Activated CD4-positive, alpha-beta memory T cell treated with anti-CD3 and anti-CD28 coated beads for 36 hours (primary cell): ENCODE measurements at regions of chr18 and their contacts with region 1.

Region 1: GRCh38 chr18:41982942-41983660 is 28.1 kb downstream of the PIK3C3 start:
- DNase-seq: no peak
- H3K4me3 Mint-ChIP-seq: no peak overlapping the region
- H3K27ac Mint-ChIP-seq: peak overlapping the region; percentile 64
- H3K4me1 Mint-ChIP-seq: peaks cover 24% of the 10 kb centered on the region
- H3K27me3 Mint-ChIP-seq: no peaks in the 10 kb centered on the region

Region 2: DNA sequence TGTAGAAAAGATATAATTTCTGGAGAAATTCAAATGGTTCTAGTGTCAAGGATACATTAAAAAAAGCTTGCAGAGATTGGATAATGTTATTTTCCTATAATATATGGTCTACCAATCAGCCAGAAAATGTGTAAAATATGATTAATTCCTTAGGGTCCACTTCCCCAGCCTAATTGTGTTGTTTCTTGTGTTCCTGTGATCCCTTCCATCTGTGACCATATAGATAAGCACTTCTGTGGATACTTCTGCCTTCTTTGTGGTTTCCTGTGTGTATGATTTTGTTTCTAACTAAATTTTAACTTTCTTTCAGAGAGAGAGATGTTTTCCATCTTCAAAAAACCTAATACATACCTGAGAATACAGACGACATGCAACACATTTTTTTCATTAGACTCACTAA is 395.1 kb before region 1 on chr18:
- CTCF ChIA-PET with region 1: no interaction called
- POLR2A ChIA-PET with region 1: no interaction called
- intact Hi-C with region 1: no loop called
- DNase-seq: no peak
- H3K4me3 Mint-ChIP-seq: no peak overlapping the region
- H3K27ac Mint-ChIP-seq: no peak overlapping the region
- H3K4me1 Mint-ChIP-seq: no peaks in the 10 kb centered on the region
- H3K27me3 Mint-ChIP-seq: no peaks in the 10 kb centered on the region

Region 3: DNA sequence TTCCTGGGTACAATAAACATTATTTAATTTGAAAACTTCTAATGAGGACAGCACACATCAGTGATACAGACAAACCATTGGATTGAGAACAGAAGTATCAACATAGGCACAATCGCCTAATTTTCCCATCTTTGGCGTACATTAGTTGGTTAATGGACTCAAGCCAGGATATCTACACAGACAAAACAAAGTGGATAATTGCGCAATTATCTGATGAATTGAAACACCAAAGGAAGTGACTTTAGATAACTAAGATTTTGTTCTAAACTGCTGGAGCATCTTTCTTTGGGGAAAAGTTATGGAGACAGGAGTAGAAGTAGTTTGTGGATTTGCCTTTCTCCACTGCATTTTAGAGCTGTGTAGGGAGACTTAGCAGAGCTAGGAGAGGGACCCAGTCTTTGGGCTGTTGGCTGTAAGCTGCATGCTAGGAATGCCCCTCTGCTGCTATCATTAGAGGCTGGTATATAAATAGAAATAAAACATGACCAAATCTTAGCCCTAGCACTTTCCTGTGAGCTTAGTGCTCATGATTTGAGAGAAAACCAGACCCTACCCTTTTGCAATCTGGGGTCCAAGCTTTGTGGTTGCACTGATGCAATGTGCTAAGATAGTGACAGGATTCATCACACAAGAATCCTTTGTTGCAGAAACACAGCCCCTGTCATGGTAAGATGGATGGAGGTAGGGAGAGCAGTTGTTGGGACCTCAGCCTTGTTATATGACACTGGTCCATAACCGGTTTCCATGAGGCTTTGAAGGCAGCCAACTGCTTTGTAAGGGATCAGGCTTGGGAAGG is 292.6 kb before region 1 on chr18:
- CTCF ChIA-PET with region 1: no interaction called
- POLR2A ChIA-PET with region 1: no interaction called
- intact Hi-C with region 1: no loop called
- DNase-seq: no peak
- H3K4me3 Mint-ChIP-seq: no peak overlapping the region
- H3K27ac Mint-ChIP-seq: no peak overlapping the region
- H3K4me1 Mint-ChIP-seq: peaks cover 8% of the 10 kb centered on the region
- H3K27me3 Mint-ChIP-seq: no peaks in the 10 kb centered on the region

Region 4: GRCh38 chr18:41939326-41939725 is 43.8 kb before region 1 on chr18:
- CTCF ChIA-PET with region 1: no interaction called
- POLR2A ChIA-PET with region 1: no interaction called
- intact Hi-C with region 1: no loop called
- DNase-seq: no peak
- H3K4me3 Mint-ChIP-seq: no peak overlapping the region
- H3K27ac Mint-ChIP-seq: no peak overlapping the region
- H3K4me1 Mint-ChIP-seq: peaks cover 9% of the 10 kb centered on the region
- H3K27me3 Mint-ChIP-seq: peaks cover 18% of the 10 kb centered on the region

Region 5: GRCh38 chr18:41949206-41949920 is 33.7 kb before region 1 on chr18:
- CTCF ChIA-PET with region 1: no interaction called
- POLR2A ChIA-PET with region 1: interaction called, 4 read pairs
- intact Hi-C with region 1: loop called (anchors 1 kb)
- DNase-seq: no peak
- H3K4me3 Mint-ChIP-seq: no peak overlapping the region
- H3K27ac Mint-ChIP-seq: peak overlapping the region; percentile 76
- H3K4me1 Mint-ChIP-seq: peaks cover 21% of the 10 kb centered on the region
- H3K27me3 Mint-ChIP-seq: peaks cover 21% of the 10 kb centered on the region

Region 6: GRCh38 chr18:41954827-41955613 is 28.1 kb before region 1 on chr18 and contains the start of gene PIK3C3:
- CTCF ChIA-PET with region 1: no interaction called
- POLR2A ChIA-PET with region 1: no interaction called
- intact Hi-C with region 1: loop called (anchors 1 kb)
- DNase-seq: peak; percentile 98
- H3K4me3 Mint-ChIP-seq: peak within 1 kb of the TSS; percentile 100
- H3K27ac Mint-ChIP-seq: peak within 1 kb of the TSS; percentile 97
- H3K4me1 Mint-ChIP-seq: peaks cover 34% of the 10 kb centered on the region
- H3K27me3 Mint-ChIP-seq: peaks cover 1% of the 10 kb centered on the region
- total RNA-seq, gene PIK3C3: 46.8 to 49.5 TPM

Region 7: DNA sequence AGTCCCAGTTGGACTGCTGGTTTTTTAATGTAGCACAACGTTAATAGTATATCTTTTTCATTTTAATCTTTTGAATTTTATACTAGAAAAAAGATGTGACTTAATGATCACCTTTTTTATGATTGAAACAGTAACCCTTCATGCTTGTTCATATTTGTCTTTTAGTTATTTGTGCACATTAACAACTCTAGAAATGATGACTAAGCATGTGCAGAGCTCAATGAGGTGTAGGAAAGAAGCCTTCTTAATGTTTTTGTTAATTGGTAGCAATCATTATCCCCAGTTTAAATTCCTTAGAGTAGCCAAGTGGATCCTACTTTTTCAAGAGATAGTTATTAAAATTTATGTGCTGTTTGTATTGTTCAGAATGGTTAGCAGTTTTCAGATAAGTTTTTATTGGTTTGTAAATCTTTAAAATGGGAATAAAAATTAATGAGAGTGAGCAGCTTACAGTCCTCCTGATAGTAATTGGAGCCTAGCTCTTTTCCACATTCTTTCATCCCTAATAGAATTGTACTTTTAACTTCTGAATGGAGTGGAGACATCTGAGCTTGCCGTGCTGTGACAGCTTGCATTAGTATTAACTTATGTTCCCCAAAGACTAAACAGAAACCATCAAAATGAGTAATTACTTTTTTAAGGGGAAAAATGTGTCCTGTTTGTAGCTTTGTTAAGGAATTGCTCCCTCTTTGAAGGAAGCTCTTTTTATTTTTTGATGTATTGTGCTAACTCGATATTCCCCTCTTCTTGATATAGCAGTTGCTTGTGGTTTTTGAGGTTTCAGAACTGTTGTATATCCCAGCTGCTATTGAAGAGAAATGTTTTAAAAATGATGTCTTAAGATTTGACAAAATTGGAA is 10.8 kb before region 1 on chr18:
- CTCF ChIA-PET with region 1: interaction called, 4 read pairs
- POLR2A ChIA-PET with region 1: interaction called, 4 read pairs
- intact Hi-C with region 1: loop called (anchors 1 kb)
- DNase-seq: no peak
- H3K4me3 Mint-ChIP-seq: no peak overlapping the region
- H3K27ac Mint-ChIP-seq: no peak overlapping the region
- H3K4me1 Mint-ChIP-seq: peaks cover 31% of the 10 kb centered on the region
- H3K27me3 Mint-ChIP-seq: no peaks in the 10 kb centered on the region

Region 8: GRCh38 chr18:42011053-42011452 is 28.0 kb after region 1 on chr18:
- CTCF ChIA-PET with region 1: interaction called, 3 read pairs
- POLR2A ChIA-PET with region 1: no interaction called
- intact Hi-C with region 1: loop called (anchors 2 kb)
- DNase-seq: no peak
- H3K4me3 Mint-ChIP-seq: no peak overlapping the region
- H3K27ac Mint-ChIP-seq: no peak overlapping the region
- H3K4me1 Mint-ChIP-seq: peaks cover 13% of the 10 kb centered on the region
- H3K27me3 Mint-ChIP-seq: no peaks in the 10 kb centered on the region

Region 9: DNA sequence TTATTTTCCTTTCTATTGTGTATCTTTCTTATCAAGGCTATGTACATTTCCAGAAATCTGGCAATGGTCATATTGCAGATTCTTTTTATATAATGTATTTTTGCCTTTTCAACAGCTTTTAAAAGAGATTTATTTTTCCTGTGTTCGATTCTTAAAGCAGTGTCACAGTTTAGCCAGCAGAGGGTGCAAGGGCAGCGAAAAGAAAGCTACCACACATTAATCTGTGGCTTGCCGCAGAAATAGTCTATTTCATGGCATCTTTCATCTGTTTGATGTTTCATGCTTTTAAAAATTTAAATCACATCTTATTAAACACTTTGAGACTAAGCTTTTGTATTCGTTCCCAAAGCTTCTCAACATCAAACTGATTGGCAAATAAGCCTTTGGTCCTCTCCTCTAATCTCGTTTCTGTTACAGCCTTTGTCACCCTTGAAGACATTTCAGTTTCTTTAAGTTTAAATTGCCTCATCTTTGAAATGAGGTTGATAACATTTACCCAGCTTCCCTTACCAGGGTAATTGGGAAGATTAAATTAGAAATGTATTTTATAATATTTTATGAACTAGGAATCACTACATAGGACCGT is 45.2 kb after region 1 on chr18:
- CTCF ChIA-PET with region 1: interaction called, 22 read pairs
- POLR2A ChIA-PET with region 1: no interaction called
- intact Hi-C with region 1: loop called (anchors 1 kb)
- DNase-seq: peak; percentile 23
- H3K4me3 Mint-ChIP-seq: no peak overlapping the region
- H3K27ac Mint-ChIP-seq: no peak overlapping the region
- H3K4me1 Mint-ChIP-seq: peaks cover 28% of the 10 kb centered on the region
- H3K27me3 Mint-ChIP-seq: no peaks in the 10 kb centered on the region